ENCODE measurements at regions of chr11 and their contacts with region 1.

Region 1: DNA sequence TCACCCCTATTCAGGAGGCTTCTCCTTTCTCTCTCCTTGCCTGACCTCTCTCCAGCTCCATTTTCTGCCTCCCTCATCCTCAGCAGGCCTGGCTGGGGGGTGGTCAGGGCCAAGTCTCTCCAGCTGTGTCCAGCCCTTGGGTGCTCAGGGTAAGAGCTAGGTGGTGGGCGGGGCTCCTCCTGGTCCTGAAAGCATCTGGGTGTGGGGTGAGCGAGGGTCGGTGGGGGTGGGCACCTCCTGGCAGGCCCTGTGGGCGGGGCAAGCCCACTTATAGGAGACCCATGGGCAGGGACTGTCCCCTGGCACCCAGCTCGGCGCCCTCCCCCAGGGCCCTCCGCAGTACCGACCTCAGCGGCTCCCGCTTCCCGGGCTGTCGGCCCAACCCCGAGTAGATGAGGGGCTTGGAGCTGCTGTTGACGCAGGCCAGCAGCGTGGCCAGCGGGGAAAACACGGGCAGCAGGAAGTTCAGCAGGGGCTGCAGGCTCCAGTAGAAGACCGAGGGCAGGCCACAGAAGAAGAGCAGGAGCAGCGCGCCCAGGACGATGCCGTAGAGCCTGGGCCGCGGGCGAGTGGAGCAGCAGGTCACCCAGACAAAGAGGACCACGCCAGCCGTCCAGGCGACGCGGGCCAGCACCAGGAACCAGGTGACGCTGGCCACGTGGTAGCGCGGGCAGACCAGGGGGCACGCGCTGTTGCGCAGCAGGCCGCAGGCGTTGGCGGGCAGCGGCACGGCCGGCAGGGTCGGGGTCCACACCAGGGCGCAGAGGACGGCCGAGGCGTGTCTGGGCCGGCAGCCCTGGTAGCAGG is 734 bp downstream of the MRGPRG start:
- DNase-seq: no peak
- H3K4me3 ChIP-seq: no peak overlapping the region
- H3K27ac ChIP-seq: no peak overlapping the region
- H3K4me1 ChIP-seq: no peaks in the 10 kb centered on the region
- H3K27me3 ChIP-seq: no peaks in the 10 kb centered on the region
- CTCF ChIP-seq: no peak

Region 2: DNA sequence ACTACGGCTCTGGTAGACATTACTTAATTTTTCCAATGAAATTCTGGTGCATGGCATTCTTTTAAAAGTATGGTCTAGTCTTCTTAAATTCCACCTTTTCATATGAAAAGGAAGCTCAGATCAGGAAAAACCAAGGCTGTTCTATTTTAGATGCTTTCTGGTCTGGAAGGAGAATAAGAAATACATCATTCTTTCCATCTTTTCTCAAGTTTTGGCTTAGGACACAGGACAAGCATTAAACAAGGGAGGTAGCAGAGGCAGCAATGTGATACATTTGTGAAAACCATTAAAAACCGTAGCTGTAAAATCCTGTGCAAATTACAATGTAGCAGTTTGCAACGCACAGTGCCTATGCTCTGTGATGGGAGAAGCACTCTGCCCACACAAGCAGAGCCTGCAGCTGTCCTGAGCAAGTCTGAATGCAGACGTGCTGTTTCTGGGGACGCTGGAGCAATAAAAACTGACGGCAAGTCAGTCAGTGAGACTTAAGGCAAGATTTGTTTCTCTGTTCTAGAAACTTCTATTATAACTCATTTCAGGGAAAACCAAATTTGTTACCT is 249.5 kb before region 1 on chr11:
- CTCF ChIA-PET with region 1: no interaction called
- POLR2A ChIA-PET with region 1: no interaction called
- intact Hi-C with region 1: no loop called
- DNase-seq: no peak
- H3K4me3 ChIP-seq: no peak overlapping the region
- H3K27ac ChIP-seq: no peak overlapping the region
- H3K4me1 ChIP-seq: no peaks in the 10 kb centered on the region
- H3K27me3 ChIP-seq: no peaks in the 10 kb centered on the region
- CTCF ChIP-seq: no peak

Region 3: GRCh38 chr11:3091791-3092602 is 125.9 kb before region 1 on chr11:
- CTCF ChIA-PET with region 1: no interaction called
- POLR2A ChIA-PET with region 1: no interaction called
- intact Hi-C with region 1: loop called (anchors 5 kb)
- DNase-seq: peak; percentile 71
- H3K4me3 ChIP-seq: no peak overlapping the region
- H3K27ac ChIP-seq: no peak overlapping the region
- H3K4me1 ChIP-seq: no peaks in the 10 kb centered on the region
- H3K27me3 ChIP-seq: no peaks in the 10 kb centered on the region
- CTCF ChIP-seq: peak; percentile 95

Region 4: DNA sequence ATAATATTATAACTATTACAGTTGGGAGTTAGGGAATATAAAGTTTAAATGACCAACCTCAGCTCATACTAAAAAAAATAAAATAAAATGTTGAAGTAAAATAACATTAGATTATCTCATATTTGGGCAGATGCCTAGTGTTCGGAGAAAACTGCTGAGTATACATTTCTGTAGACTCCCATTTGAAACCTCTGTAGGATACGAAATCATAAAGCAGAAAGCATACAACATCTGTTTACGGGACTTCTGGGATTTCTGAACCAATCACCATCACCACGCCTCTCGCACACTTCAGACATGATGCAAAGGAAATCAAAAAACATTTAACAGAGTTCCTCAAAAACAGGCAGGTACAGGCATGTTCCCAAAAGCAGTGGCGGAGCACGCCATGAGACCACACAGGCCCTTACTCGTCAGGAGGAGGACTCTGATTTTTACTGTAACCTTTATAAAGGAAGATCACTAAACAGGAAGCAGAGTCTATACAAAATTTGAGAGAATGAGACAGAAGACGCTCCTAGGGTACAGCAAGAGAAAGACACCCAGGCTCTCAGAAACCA is 152.5 kb after region 1 on chr11:
- CTCF ChIA-PET with region 1: no interaction called
- POLR2A ChIA-PET with region 1: no interaction called
- intact Hi-C with region 1: no loop called
- DNase-seq: no peak
- H3K4me3 ChIP-seq: no peak overlapping the region
- H3K27ac ChIP-seq: no peak overlapping the region
- H3K4me1 ChIP-seq: no peaks in the 10 kb centered on the region
- H3K27me3 ChIP-seq: no peaks in the 10 kb centered on the region
- CTCF ChIP-seq: no peak

Region 5: GRCh38 chr11:3412837-3413236 is 195.0 kb after region 1 on chr11:
- CTCF ChIA-PET with region 1: no interaction called
- POLR2A ChIA-PET with region 1: no interaction called
- intact Hi-C with region 1: no loop called
- DNase-seq: no peak
- H3K4me3 ChIP-seq: no peak overlapping the region
- H3K27ac ChIP-seq: no peak overlapping the region
- H3K4me1 ChIP-seq: no peaks in the 10 kb centered on the region
- H3K27me3 ChIP-seq: no peaks in the 10 kb centered on the region
- CTCF ChIP-seq: no peak

Region 6: DNA sequence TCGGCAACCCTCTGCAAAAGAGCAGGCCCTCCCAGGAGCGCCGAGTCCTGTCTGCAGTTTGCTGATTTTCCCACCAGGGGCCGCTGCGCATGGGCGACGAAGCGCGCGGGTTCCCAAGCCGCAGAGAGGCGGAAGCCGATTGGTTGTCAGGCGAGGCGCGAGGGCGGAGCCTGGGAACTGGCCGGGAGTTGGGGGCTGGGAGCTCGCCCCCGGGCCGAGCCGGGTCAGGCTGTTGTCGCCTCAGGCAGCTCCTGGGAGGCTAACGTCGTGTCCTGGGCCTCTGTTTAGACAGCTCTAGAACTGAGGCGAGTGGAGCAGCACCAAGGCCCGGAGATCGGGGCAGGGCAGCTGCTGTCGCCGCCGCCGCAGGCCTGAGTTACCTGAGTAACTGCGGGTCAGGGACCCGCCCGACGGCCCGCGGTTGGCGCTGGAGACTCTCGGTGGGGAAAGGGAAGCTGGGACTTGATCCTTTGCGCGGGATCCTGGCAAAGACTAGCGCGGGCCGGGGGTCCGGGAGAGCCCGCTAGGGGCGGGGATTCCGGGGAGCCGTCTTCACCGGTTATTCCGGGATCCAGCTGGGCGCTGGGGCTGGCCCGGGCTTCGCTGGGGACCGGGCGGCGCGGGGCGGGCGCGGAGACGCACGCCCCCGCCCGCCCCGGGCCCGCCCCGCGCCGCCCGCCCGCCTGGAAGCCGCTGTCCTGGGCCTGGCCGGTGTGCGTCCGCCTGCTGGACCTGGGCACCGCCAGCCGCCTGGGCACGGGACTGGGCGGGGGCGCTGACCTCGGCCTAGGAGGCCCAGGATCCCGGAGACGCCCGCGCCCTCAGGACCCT is 637.3 kb after region 1 on chr11 and contains the start of gene STIM1:
- CTCF ChIA-PET with region 1: no interaction called
- POLR2A ChIA-PET with region 1: no interaction called
- intact Hi-C with region 1: no loop called
- DNase-seq: peak; percentile 95
- H3K4me3 ChIP-seq: peak within 1 kb of the TSS; percentile 97
- H3K27ac ChIP-seq: peak within 1 kb of the TSS; percentile 66
- H3K4me1 ChIP-seq: peaks cover 20% of the 10 kb centered on the region
- H3K27me3 ChIP-seq: no peaks in the 10 kb centered on the region
- CTCF ChIP-seq: peak; percentile 92
- total RNA-seq, gene STIM1: 14.2 and 18.6 TPM in 2 replicates

Measured in A673 (cell line).